Activated CD4-positive, alpha-beta T cell treated with anti-CD3 and anti-CD28 coated beads for 36 hours (primary cell): ENCODE measurements at regions of chr16 and their contacts with region 1.

Region 1: DNA sequence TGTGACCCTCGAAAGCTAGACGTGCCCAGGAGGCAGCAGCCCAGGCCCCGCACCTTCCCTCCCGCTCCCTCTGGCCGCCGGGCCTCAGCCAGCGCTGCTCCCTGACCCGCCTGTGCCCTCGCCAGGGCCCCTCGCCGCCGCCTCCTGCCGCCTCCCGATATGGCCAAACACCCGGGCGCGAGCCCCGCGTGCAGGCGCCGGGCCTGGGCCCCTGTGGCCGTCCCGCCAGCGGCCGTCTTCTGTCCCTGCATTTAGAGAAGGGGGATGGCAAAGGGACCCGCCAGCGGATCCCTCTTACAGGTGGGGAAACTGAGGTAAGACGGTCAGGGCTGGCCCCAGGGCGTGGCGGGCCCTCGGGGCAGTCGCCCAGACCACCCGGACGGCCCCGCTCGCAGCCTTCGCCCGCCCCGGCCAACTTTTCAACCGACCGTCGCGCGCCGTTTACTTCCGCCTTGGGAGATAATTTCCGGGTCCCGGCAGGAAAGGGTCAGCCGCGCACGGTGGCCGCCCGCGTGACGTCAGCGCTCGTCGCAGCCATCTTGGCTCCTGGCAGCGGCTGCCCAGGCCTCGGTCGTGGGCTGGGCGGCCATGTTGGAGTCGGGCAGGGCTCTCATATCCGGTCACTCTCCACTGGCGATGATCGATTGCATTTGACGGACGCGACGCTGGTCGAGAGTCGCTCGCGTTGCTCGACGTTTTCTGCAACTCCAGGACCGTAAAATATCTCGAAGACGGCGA is 7.0 kb upstream of the GNG13 start:
- DNase-seq: peak; percentile 93
- ATAC-seq: peak; percentile 98
- H3K4me3 Mint-ChIP-seq: peak overlapping the region; percentile 96
- H3K27ac Mint-ChIP-seq: peak overlapping the region; percentile 95
- H3K4me1 Mint-ChIP-seq: peaks cover 8% of the 10 kb centered on the region
- H3K27me3 Mint-ChIP-seq: peaks cover 4% of the 10 kb centered on the region

Region 2: GRCh38 chr16:740764-741505 is 66.6 kb before region 1 on chr16 and contains the start of gene CIAO3:
- CTCF ChIA-PET with region 1: interaction called, 3 read pairs
- POLR2A ChIA-PET with region 1: no interaction called
- intact Hi-C with region 1: loop called in 1 of 2 experiments (anchors 1 kb)
- DNase-seq: peak; percentile 96
- ATAC-seq: peak; percentile 72
- H3K4me3 Mint-ChIP-seq: peak within 1 kb of the TSS; percentile 76
- H3K27ac Mint-ChIP-seq: peak within 1 kb of the TSS; percentile 51
- H3K4me1 Mint-ChIP-seq: peaks cover 22% of the 10 kb centered on the region
- H3K27me3 Mint-ChIP-seq: no peaks in the 10 kb centered on the region
- total RNA-seq, gene CIAO3: 28.3 to 31.9 TPM